Activated T-helper 1 cell treated with anti-CD3 and anti-CD28 coated beads, Interleukin-12 subunit alpha, Interleukin-12 subunit beta, Interleukin-2, Interleukin-4 antibody, amounts not matched to agents 30 ng/mL and 10 ng/mL and 1 ng/mL, durations not matched to agents 14 hours and 24 hours and 36 hours (primary cell): ENCODE measurements at regions of chr5 and their contacts with region 1.

Region 1: DNA sequence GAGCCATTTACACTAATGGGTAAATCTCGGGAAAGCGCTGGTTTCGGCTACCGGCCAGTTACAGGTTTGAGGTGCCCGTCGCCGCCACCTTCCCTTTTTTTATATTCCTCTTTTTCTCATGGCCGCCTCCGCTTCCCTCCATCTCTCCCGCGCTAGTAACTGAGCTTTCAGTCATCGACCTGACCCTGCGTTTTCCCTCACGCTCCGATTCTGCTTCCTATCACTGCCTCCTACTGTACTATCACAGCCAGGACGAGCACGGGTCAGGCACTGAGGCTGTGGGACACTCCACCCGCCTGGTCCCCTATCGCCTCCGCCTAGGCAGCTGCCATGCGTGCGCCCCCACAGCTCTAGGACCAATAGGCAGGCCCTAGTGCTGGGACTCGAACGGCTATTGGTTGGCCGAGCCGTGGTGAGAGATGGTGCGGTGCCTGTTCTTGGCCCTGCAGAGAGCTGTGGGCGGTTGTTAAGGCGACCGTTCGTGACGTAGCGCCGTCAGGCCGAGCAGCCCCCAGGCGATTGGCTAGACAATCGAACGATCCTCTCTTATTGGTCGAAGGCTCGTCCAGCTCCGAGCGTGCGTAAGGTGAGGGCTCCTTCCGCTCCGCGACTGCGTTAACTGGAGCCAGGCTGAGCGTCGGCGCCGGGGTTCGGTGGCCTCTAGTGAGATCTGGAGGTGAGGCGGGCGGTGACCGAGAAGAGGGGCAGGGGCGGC is at the start of gene HMGCR:
- DNase-seq: peak; percentile 96
- H3K4me3 Mint-ChIP-seq: no peak within 1 kb of the TSS
- H3K27ac Mint-ChIP-seq: no peak within 1 kb of the TSS
- H3K4me1 Mint-ChIP-seq: peaks cover 40% of the 10 kb centered on the region
- H3K27me3 Mint-ChIP-seq: no peaks in the 10 kb centered on the region
- total RNA-seq, gene HMGCR: 95.7 and 113 TPM in 2 replicates

Region 2: GRCh38 chr5:74684900-74685851 is 651.6 kb before region 1 on chr5 and contains the start of gene HEXB:
- intact Hi-C with region 1: loop called (anchors 10 kb)
- DNase-seq: peak; percentile 83
- H3K4me3 Mint-ChIP-seq: peak within 1 kb of the TSS; percentile 90
- H3K27ac Mint-ChIP-seq: peak within 1 kb of the TSS; percentile 71
- H3K4me1 Mint-ChIP-seq: peaks cover 23% of the 10 kb centered on the region
- H3K27me3 Mint-ChIP-seq: peaks cover 14% of the 10 kb centered on the region
- total RNA-seq, gene HEXB: 62.7 and 71.4 TPM in 2 replicates

Region 3: GRCh38 chr5:75320341-75320740 is 16.4 kb before region 1 on chr5:
- intact Hi-C with region 1: loop called (anchors 1 kb)
- DNase-seq: no peak
- H3K4me3 Mint-ChIP-seq: no peak overlapping the region
- H3K27ac Mint-ChIP-seq: no peak overlapping the region
- H3K4me1 Mint-ChIP-seq: peaks cover 13% of the 10 kb centered on the region
- H3K27me3 Mint-ChIP-seq: peaks cover 2% of the 10 kb centered on the region

Region 4: DNA sequence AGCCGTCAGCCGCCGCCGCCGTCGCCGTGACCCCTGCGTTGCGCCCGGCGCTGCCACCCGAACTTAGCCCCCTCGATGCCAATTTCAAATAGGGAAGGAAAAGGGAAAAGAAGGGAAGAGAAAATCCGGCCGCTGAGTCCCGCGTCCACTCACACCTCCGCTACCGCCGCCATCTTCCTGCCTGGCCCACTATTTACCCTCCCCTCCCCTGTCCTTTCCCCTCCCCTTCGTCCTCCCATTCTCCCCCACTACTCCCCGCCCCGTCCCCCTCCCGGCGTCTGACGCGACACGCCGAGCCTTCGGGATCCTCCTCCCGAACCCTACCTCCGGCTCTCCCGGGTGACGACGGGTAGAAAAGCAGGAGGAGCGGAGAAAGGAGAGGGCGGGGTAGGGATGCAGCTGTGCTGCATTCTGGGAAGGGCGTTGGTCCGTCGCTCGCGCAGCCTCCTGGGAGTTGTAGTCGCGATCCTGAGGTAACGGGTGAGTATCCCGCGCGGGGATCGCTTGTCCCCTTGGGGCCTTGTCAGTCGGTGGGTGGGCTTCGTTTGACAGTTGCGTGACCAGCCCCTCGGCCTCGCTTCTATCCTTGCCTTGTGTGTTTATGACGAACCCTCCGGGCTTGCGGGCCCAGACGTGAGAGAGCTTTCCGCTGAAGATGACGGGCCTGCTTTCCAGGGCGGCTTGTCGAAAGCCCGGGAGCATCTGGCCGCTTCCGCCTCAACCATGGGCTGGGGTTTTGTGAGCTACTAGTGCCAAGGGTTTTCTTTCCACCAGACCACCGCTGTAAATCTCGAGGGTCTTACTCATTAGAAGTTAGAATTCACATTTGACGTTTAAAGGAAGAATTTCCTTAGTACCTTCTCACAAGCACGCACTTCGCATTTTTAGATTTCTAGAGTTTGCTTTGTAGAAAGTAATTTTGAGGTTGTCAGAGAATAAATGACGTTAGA is 174.9 kb after region 1 on chr5 and contains the starts of genes CERT1 and POLK:
- intact Hi-C with region 1: loop called (anchors 1 kb)
- DNase-seq: peak; percentile 96
- H3K4me3 Mint-ChIP-seq: peak within 1 kb of the TSS; percentile 99
- H3K27ac Mint-ChIP-seq: peak within 1 kb of the TSS; percentile 93
- H3K4me1 Mint-ChIP-seq: peaks cover 62% of the 10 kb centered on the region
- H3K27me3 Mint-ChIP-seq: no peaks in the 10 kb centered on the region
- total RNA-seq, gene CERT1: 41.0 and 43.4 TPM in 2 replicates
- total RNA-seq, gene POLK: 38.0 and 40.4 TPM in 2 replicates

Region 5: DNA sequence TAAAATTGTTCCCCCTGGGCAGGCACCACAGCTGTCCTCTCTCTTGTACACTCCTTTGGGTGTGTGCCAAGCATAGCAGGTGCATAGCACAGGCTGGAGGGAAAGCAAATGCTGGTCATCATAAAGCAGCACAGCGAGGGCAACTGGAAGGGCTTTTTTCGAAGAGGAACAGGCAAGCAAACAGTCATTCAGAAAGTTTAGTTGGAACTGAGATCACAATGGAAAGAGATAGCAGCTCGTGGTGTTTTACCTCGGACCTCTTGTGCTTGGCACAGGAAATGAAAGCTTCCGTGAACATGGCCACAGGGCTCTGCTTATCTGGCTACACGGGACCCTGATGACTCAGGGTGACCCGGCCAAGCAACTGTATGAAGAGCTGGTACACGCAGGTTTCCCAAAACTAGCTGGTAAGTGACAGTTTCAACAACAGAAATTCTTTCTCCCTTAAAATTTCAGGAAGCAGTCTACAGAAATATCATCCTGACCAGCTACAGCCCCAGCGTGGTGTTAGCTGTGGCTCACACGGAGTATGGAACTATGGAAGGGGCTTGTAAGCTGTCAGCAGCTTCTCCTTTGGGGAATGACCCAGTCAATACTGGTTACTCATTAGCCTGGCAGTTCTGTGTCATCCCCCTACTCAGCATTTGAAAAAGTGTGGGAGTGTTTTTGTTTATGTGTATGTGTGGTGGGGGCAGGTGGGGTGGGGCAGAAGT is 332.4 kb after region 1 on chr5:
- intact Hi-C with region 1: loop called (anchors 1 kb)
- DNase-seq: peak; percentile 37
- H3K4me3 Mint-ChIP-seq: peak overlapping the region; percentile 79
- H3K27ac Mint-ChIP-seq: peak overlapping the region; percentile 91
- H3K4me1 Mint-ChIP-seq: peaks cover 36% of the 10 kb centered on the region
- H3K27me3 Mint-ChIP-seq: peaks cover 3% of the 10 kb centered on the region

Region 6: GRCh38 chr5:75717082-75717922 is 380.5 kb after region 1 on chr5 and contains the start of gene POC5:
- intact Hi-C with region 1: loop called (anchors 1 kb)
- DNase-seq: peak; percentile 98
- H3K4me3 Mint-ChIP-seq: peak within 1 kb of the TSS; percentile 98
- H3K27ac Mint-ChIP-seq: peak within 1 kb of the TSS; percentile 100
- H3K4me1 Mint-ChIP-seq: peaks cover 34% of the 10 kb centered on the region
- H3K27me3 Mint-ChIP-seq: peaks cover 3% of the 10 kb centered on the region
- total RNA-seq, gene POC5: 20.7 and 24.2 TPM in 2 replicates